Heart left ventricle (tissue), 16 donors: ENCODE measurements at regions of chr16 and their contacts with region 1.

Region 1: DNA sequence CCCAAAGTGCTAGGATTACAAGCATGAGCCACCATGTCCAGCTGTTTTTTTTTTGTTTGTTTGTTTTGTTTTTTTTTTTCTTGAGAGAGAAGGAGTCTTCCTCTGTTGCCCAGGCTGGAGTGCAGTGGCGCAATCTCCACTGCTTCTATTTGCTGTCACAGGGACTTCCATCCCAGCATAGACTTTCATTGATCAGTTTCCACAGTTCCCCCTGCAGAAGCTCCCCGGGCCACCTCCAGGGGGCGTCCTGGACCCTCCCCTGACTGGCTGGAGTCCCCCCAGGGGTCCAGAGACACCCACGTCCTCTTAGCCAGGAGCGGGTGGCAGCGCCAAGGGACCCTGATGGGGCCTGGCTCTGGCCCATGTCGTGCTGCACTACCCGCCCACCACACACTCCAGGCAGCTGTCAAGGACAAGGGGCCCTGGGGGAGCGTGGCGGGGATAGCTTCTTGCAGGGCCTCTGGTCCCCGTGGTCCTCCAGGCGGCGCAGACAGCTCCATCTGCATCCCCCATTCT is 3.1 kb upstream of the NPW start:
- DNase-seq: no peak
- ATAC-seq: no peak
- H3K4me3 ChIP-seq: no peak overlapping the region
- H3K27ac ChIP-seq: no peak overlapping the region
- H3K4me1 ChIP-seq: peaks cover 0 to 15% (median 10%) of the 10 kb centered on the region in 12 donors
- H3K27me3 ChIP-seq: peaks cover 10 to 36% (median 26%) of the 10 kb centered on the region in 9 donors
- CTCF ChIP-seq: peak; percentile 6 to 47 (median 26)
- POLR2A ChIP-seq: no peak

Region 2: GRCh38 chr16:2056681-2057407 is 40.4 kb after region 1 on chr16:
- intact Hi-C with region 1: loop called in 3 of 10 experiments (anchors 5 kb)
- DNase-seq: no peak
- ATAC-seq: peak in 2 of 4 donors; percentile 23 to 84
- H3K4me3 ChIP-seq: no peak overlapping the region
- H3K27ac ChIP-seq: no peak overlapping the region
- H3K4me1 ChIP-seq: no peaks in the 10 kb centered on the region
- H3K27me3 ChIP-seq: no peaks in the 10 kb centered on the region
- CTCF ChIP-seq: peak in 1 of 12 donors; percentile 17
- POLR2A ChIP-seq: no peak